Heart right ventricle (tissue), 16 donors: ENCODE measurements at regions of chr1 and their contacts with region 1.

Region 1: GRCh38 chr1:225772323-225772768 is 5.3 kb upstream of the SRP9 start:
- DNase-seq: peak; percentile 72 to 90
- ATAC-seq: peak; percentile 81 to 92 (median 87)
- H3K4me3 ChIP-seq: no peak overlapping the region
- H3K27ac ChIP-seq: peak overlapping the region in 7 of 10 donors; percentile 26 to 67 (median 42)
- H3K4me1 ChIP-seq: peaks cover 19 to 74% (median 52%) of the 10 kb centered on the region in 9 donors
- H3K27me3 ChIP-seq: no peaks in the 10 kb centered on the region
- CTCF ChIP-seq: peak; percentile 81 to 94 (median 91)

Region 2: GRCh38 chr1:225474986-225475820 is 297.1 kb before region 1 on chr1:
- intact Hi-C with region 1: loop called (anchors 1 to 5 kb)
- DNase-seq: peak in 1 of 2 donors; percentile 69
- ATAC-seq: peak; percentile 84 to 90 (median 90)
- H3K4me3 ChIP-seq: peak overlapping the region in 4 of 10 donors; percentile 19 to 35 (median 26)
- H3K27ac ChIP-seq: no peak overlapping the region
- H3K4me1 ChIP-seq: peaks cover 0 to 9% (median 6%) of the 10 kb centered on the region in 9 donors
- H3K27me3 ChIP-seq: no peaks in the 10 kb centered on the region
- CTCF ChIP-seq: peak; percentile 100

Region 3: DNA sequence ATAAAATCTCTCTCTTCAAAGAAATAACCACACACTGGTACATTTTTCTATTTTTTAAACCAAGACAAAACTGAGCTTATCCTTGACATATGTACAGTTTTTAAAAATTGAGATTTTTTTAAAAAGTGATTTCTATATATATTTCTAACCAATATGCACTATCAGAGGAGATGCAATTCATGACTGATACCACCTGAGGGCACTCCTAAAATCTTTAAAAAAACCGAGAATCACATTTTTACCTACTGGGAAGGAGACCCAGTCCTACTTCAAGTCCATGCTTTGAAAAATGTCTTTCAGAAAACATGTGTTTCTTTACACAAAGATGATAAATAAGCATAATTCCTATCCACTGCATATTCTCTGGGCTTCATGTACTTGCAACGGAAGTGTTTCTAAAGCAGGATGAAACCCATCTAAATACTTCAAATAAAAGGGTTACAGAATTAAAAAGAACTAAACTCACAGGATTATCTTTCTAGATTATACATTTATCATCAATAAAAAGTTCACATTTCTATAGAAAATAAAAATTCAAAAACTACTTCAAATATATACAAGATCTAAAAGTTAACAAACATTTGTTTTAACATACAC is 218.0 kb before region 1 on chr1:
- intact Hi-C with region 1: loop called in 9 of 10 experiments (anchors 2 to 10 kb)
- DNase-seq: no peak
- ATAC-seq: peak in 3 of 8 donors; percentile 38 to 51 (median 42)
- H3K4me3 ChIP-seq: no peak overlapping the region
- H3K27ac ChIP-seq: no peak overlapping the region
- H3K4me1 ChIP-seq: peaks cover 0 to 25% (median 13%) of the 10 kb centered on the region in 9 donors
- H3K27me3 ChIP-seq: no peaks in the 10 kb centered on the region
- CTCF ChIP-seq: peak; percentile 36 to 78 (median 61)

Region 4: DNA sequence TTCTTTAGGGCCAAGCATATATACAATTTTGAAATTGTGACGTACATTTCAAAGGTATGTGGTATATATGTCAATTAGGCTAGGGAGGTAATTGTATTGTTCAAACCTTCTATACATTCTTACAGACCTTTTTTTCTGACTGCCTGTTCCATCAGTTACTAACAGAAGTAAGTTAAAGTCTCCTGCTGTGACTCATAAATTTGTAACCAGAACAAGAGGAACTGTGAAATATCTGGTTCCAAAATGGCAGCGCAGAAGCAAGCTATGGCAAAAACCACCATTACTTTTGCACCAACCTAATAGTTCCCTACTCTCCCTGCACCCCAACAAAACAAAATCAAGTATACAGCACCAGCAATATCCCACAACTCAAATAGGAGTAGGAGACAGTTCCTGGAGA is 213.0 kb before region 1 on chr1:
- intact Hi-C with region 1: loop called in 9 of 10 experiments (anchors 2 to 10 kb)
- DNase-seq: no peak
- ATAC-seq: no peak
- H3K4me3 ChIP-seq: no peak overlapping the region
- H3K27ac ChIP-seq: no peak overlapping the region
- H3K4me1 ChIP-seq: peaks cover 0 to 8% (median 0%) of the 10 kb centered on the region in 9 donors
- H3K27me3 ChIP-seq: no peaks in the 10 kb centered on the region
- CTCF ChIP-seq: no peak

Region 5: GRCh38 chr1:225694151-225694603 is 78.2 kb before region 1 on chr1:
- intact Hi-C with region 1: loop called in 2 of 10 experiments (anchors 2 to 5 kb)
- DNase-seq: peak; percentile 24 to 62
- ATAC-seq: peak; percentile 82 to 94 (median 92)
- H3K4me3 ChIP-seq: no peak overlapping the region
- H3K27ac ChIP-seq: peak overlapping the region in 8 of 10 donors; percentile 28 to 86 (median 59)
- H3K4me1 ChIP-seq: peaks cover 10 to 77% (median 59%) of the 10 kb centered on the region in 9 donors
- H3K27me3 ChIP-seq: no peaks in the 10 kb centered on the region
- CTCF ChIP-seq: no peak

Region 6: GRCh38 chr1:225735252-225736149 is 36.8 kb before region 1 on chr1:
- intact Hi-C with region 1: loop called in 1 of 10 experiments (anchors 5 kb)
- DNase-seq: peak; percentile 66 to 70
- ATAC-seq: peak; percentile 92 to 97 (median 94)
- H3K4me3 ChIP-seq: no peak overlapping the region
- H3K27ac ChIP-seq: peak overlapping the region in 9 of 10 donors; percentile 17 to 79 (median 70)
- H3K4me1 ChIP-seq: peaks cover 0 to 31% (median 23%) of the 10 kb centered on the region in 9 donors
- H3K27me3 ChIP-seq: no peaks in the 10 kb centered on the region
- CTCF ChIP-seq: peak in 3 of 9 donors; percentile 20 to 34 (median 26)

Region 7: GRCh38 chr1:225855503-225856300 is 83.4 kb after region 1 on chr1:
- intact Hi-C with region 1: no loop called
- DNase-seq: no peak
- ATAC-seq: no peak
- H3K4me3 ChIP-seq: no peak overlapping the region
- H3K27ac ChIP-seq: peak overlapping the region in 1 of 10 donors; percentile 49
- H3K4me1 ChIP-seq: peaks cover 0 to 19% (median 0%) of the 10 kb centered on the region in 9 donors
- H3K27me3 ChIP-seq: no peaks in the 10 kb centered on the region
- CTCF ChIP-seq: no peak